Activated CD8-positive, alpha-beta memory T cell treated with anti-CD3 and anti-CD28 coated beads, Interleukin-2, amount 10 ng/mL, durations not matched to agents 7 days and 5 days (primary cell): ENCODE measurements at regions of chr6 and their contacts with region 1.

Region 1: GRCh38 chr6:41787219-41787917 is at the start of gene TOMM6:
- DNase-seq: peak; percentile 97
- ATAC-seq: peak; percentile 87
- H3K4me3 Mint-ChIP-seq: peak within 1 kb of the TSS; percentile 97
- H3K27ac Mint-ChIP-seq: peak within 1 kb of the TSS; percentile 97
- H3K4me1 Mint-ChIP-seq: peaks cover 22% of the 10 kb centered on the region
- H3K27me3 Mint-ChIP-seq: peaks cover 9% of the 10 kb centered on the region
- total RNA-seq, gene TOMM6: 161 to 219 TPM

Region 2: GRCh38 chr6:41775293-41776181 is 11.8 kb before region 1 on chr6:
- CTCF ChIA-PET with region 1: interaction called, 28 read pairs
- DNase-seq: peak; percentile 65
- ATAC-seq: peak; percentile 43
- H3K4me3 Mint-ChIP-seq: no peak overlapping the region
- H3K27ac Mint-ChIP-seq: no peak overlapping the region
- H3K4me1 Mint-ChIP-seq: peaks cover 6% of the 10 kb centered on the region
- H3K27me3 Mint-ChIP-seq: no peaks in the 10 kb centered on the region

Region 3: GRCh38 chr6:41895300-41896233 is 108.2 kb after region 1 on chr6 and contains the start of gene USP49:
- CTCF ChIA-PET with region 1: interaction called, 15 read pairs
- DNase-seq: peak; percentile 94
- ATAC-seq: peak; percentile 98
- H3K4me3 Mint-ChIP-seq: no peak within 1 kb of the TSS
- H3K27ac Mint-ChIP-seq: peak within 1 kb of the TSS; percentile 75
- H3K4me1 Mint-ChIP-seq: peaks cover 9% of the 10 kb centered on the region
- H3K27me3 Mint-ChIP-seq: peaks cover 4% of the 10 kb centered on the region
- total RNA-seq, gene USP49: 7.7 to 9.1 TPM

Region 4: DNA sequence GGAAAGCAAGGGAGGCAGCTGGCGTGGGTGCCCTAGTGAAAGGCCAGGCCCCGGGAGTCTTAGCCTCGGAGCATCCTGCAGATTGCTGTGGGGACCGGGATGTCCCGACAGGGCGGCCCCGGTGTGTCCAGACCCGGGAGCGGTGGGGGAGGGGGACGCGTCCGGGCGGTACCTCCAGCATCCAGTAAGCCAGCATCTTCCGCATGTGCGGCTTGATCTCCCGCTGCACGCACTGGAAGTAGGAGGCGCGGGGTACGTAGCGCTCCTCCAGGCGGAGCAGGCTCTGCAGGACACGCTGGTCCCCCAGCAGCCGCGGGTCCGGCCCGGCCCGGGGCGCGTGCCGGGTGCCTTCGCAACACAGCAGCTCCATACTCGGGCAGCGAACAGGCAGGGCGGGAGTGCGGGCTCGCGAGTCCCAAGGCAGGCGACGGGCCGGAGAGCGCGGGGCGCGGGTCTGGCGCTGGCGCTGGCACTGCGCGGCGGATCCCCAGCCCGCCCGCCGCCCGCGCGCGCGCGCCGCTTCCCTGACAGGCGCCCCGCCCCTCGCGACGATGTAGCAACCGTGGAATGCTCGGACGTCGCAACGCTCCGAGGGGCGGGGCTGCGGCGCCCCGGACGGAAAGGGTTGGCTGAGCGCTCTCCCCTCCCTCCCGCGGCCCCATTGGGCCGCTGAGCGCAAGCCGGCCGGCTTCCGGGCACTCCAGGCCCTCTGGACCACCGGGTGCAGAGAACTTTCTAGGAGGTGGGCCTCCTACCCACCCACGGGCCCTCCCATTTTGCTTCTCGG is 154.1 kb after region 1 on chr6 and contains the start of gene CCND3:
- CTCF ChIA-PET with region 1: interaction called, 10 read pairs
- DNase-seq: peak; percentile 95
- ATAC-seq: peak; percentile 84
- H3K4me3 Mint-ChIP-seq: peak within 1 kb of the TSS; percentile 99
- H3K27ac Mint-ChIP-seq: peak within 1 kb of the TSS; percentile 89
- H3K4me1 Mint-ChIP-seq: peaks cover 55% of the 10 kb centered on the region
- H3K27me3 Mint-ChIP-seq: no peaks in the 10 kb centered on the region
- total RNA-seq, gene CCND3: 333 to 502 TPM

Region 5: GRCh38 chr6:42212442-42212841 is 425.1 kb after region 1 on chr6:
- CTCF ChIA-PET with region 1: interaction called, 18 read pairs
- DNase-seq: no peak
- ATAC-seq: no peak
- H3K4me3 Mint-ChIP-seq: no peak overlapping the region
- H3K27ac Mint-ChIP-seq: no peak overlapping the region
- H3K4me1 Mint-ChIP-seq: peaks cover 28% of the 10 kb centered on the region
- H3K27me3 Mint-ChIP-seq: no peaks in the 10 kb centered on the region